Caco-2 (cell line): ENCODE measurements at regions of chr13 and their contacts with region 1.

Region 1: DNA sequence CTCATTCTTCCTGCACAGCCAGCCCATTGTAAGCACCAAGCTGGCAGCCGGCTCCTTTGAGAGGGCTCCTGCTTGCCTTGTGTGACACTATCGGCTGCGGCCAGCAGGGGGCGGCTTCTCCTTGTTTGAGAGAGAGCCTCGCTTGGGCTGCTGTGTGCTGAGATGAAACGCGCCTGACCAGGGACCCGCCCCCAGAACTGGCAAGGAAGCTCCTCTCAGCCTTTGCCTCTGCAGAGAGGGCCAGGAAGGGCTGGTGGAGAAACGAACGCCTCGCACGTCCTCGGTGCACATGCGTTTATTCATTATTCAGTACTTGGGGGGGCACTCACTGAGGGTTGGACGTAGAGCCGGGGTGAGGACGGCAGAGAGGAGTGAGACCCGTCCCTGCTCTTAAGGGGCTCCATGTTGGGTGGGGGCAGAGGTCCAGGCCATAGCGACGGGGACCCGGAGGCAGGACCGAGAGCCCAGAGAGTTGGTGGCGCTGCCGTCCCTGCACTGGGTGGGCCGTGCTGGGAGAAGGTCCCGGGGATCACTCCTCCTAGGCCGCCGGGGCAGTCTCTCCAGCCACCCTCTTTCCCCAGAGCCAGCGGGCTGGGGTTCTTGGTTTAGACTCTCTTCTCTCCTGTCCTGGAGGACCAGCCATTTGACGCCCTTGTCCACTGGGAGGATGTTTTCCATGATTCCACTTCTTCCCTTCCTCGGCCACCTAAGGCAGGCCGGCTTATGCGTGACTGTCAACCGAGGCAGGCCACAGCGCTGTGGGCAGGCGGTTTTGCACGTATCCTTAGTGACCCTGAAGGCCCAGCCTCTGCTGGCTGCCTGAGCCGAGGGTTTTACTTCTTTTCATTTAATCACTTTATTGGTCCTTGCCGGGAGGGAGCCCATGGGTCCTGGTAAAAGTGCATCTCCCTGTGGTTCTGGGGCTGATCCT is 174.5 kb downstream of the KATNAL1 start:
- DNase-seq: peak; percentile 94 to 96
- H3K4me3 ChIP-seq: no peak overlapping the region
- H3K4me3 Mint-ChIP-seq: no peak overlapping the region
- H3K27ac Mint-ChIP-seq: no peak overlapping the region
- H3K4me1 ChIP-seq: peaks cover 5% of the 10 kb centered on the region; the same call in 1 of the 2 replicates
- H3K4me1 Mint-ChIP-seq: peaks cover 12% of the 10 kb centered on the region
- H3K27me3 ChIP-seq: no peaks in the 10 kb centered on the region
- H3K27me3 Mint-ChIP-seq: no peaks in the 10 kb centered on the region
- CTCF ChIP-seq: peak; percentile 92 to 95

Region 2: DNA sequence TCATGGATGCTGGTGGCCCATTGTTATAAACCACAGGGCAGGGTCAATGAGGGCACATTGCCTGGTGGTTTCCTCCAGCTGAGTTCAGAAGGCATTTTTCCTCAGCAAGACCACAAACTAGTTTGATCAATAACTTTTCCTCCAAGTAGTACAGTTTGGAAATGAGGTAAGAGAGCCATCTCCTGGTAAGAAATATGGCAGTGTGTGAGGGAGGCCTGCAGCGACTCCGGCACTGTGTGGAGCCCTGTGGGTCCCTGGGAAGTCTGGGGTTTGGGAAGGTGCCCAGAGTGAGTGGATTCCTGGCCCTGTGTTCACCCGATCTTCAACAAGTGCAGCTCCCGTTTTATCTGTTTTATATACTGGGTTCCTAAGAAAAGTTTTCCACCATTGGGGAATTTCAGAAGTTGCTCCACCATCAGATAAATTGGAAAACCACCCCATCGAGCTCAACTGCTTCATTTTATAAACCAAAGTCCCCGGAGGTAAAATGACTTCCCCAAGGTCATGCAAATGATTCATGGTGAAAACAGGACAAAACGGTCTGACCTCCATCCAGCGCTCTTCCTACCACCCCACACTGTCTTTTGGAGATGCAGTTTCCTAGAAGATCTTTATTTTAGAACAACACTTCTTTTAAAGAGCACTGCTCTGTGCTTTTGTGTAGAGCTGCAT is 26.0 kb after region 1 on chr13:
- CTCF ChIA-PET with region 1: interaction called, 13 read pairs
- POLR2A ChIA-PET with region 1: no interaction called
- intact Hi-C with region 1: loop called (anchors 1 kb)
- DNase-seq: no peak
- H3K4me3 ChIP-seq: no peak overlapping the region
- H3K4me3 Mint-ChIP-seq: no peak overlapping the region
- H3K27ac Mint-ChIP-seq: no peak overlapping the region
- H3K4me1 ChIP-seq: no peaks in the 10 kb centered on the region
- H3K4me1 Mint-ChIP-seq: no peaks in the 10 kb centered on the region
- H3K27me3 ChIP-seq: no peaks in the 10 kb centered on the region
- H3K27me3 Mint-ChIP-seq: peaks cover 3% of the 10 kb centered on the region
- CTCF ChIP-seq: peak; percentile 29 to 46

Region 3: GRCh38 chr13:30241532-30241931 is 108.6 kb after region 1 on chr13:
- CTCF ChIA-PET with region 1: no interaction called
- POLR2A ChIA-PET with region 1: no interaction called
- intact Hi-C with region 1: no loop called
- DNase-seq: no peak
- H3K4me3 ChIP-seq: no peak overlapping the region
- H3K4me3 Mint-ChIP-seq: no peak overlapping the region
- H3K27ac Mint-ChIP-seq: no peak overlapping the region
- H3K4me1 ChIP-seq: no peaks in the 10 kb centered on the region
- H3K4me1 Mint-ChIP-seq: no peaks in the 10 kb centered on the region
- H3K27me3 ChIP-seq: no peaks in the 10 kb centered on the region
- H3K27me3 Mint-ChIP-seq: no peaks in the 10 kb centered on the region
- CTCF ChIP-seq: no peak

Region 4: GRCh38 chr13:30306762-30307193 is 173.9 kb after region 1 on chr13:
- CTCF ChIA-PET with region 1: no interaction called
- POLR2A ChIA-PET with region 1: no interaction called
- intact Hi-C with region 1: loop called (anchors 10 kb)
- DNase-seq: peak; percentile 95
- H3K4me3 ChIP-seq: peak overlapping the region; percentile 82
- H3K4me3 Mint-ChIP-seq: peak overlapping the region; percentile 77
- H3K27ac Mint-ChIP-seq: peak overlapping the region; percentile 51
- H3K4me1 ChIP-seq: 0 out of 2 replicates have a peak, but pooled peaks cover 5% of the 10 kb centered on the region
- H3K4me1 Mint-ChIP-seq: no peaks in the 10 kb centered on the region
- H3K27me3 ChIP-seq: no peaks in the 10 kb centered on the region
- H3K27me3 Mint-ChIP-seq: peaks cover 6% of the 10 kb centered on the region
- CTCF ChIP-seq: no peak

Region 5: DNA sequence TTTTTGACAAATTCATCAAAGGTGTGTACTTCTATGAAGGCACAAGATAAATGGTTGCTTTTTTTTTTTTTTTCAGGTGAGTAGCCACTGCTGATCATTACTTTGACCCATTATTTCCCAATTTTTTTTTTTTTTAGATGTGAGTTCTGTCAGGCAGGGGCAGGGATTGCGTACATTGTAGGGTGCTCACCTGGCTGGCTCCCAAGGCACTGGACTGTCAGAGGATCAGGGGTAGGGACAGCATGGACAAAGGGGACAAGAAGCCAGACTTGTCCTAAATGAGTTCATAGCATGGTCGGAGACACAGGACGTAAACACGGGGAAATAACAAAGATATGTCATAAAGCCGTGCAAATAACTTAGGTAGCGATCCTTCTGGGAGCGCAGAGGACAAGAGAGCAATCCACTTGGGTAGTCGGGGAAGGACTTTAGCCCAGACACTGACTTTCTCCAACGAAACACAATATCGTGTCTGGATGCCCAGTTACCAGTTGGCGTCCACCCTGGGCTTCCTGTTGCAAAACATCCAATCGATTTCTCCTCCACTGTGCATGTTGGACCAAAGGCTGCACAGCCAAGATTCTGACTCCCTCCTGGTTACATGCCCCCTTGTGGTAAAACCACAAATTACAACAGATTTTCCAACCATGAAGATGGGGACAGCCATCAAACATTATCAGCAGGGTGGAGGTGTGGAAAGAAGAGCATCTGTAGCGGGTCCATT is 201.9 kb after region 1 on chr13:
- CTCF ChIA-PET with region 1: no interaction called
- POLR2A ChIA-PET with region 1: no interaction called
- intact Hi-C with region 1: loop called (anchors 5 kb)
- DNase-seq: peak in 1 of 2 experiments; percentile 58
- H3K4me3 ChIP-seq: no peak overlapping the region
- H3K4me3 Mint-ChIP-seq: no peak overlapping the region
- H3K27ac Mint-ChIP-seq: no peak overlapping the region
- H3K4me1 ChIP-seq: peaks cover 55% of the 10 kb centered on the region
- H3K4me1 Mint-ChIP-seq: peaks cover 30% of the 10 kb centered on the region
- H3K27me3 ChIP-seq: no peaks in the 10 kb centered on the region
- H3K27me3 Mint-ChIP-seq: no peaks in the 10 kb centered on the region
- CTCF ChIP-seq: peak; percentile 32 to 48

Region 6: GRCh38 chr13:30551189-30551588 is 418.3 kb after region 1 on chr13:
- CTCF ChIA-PET with region 1: interaction called, 5 read pairs
- POLR2A ChIA-PET with region 1: no interaction called
- intact Hi-C with region 1: loop called (anchors 1 kb)
- DNase-seq: peak in 1 of 2 experiments; percentile 41
- H3K4me3 ChIP-seq: no peak overlapping the region
- H3K4me3 Mint-ChIP-seq: no peak overlapping the region
- H3K27ac Mint-ChIP-seq: no peak overlapping the region
- H3K4me1 ChIP-seq: no peaks in the 10 kb centered on the region
- H3K4me1 Mint-ChIP-seq: no peaks in the 10 kb centered on the region
- H3K27me3 ChIP-seq: no peaks in the 10 kb centered on the region
- H3K27me3 Mint-ChIP-seq: no peaks in the 10 kb centered on the region
- CTCF ChIP-seq: peak; percentile 33 to 61

Region 7: GRCh38 chr13:30581582-30581981 is 448.7 kb after region 1 on chr13:
- CTCF ChIA-PET with region 1: interaction called, 10 read pairs
- POLR2A ChIA-PET with region 1: no interaction called
- intact Hi-C with region 1: loop called (anchors 5 kb)
- DNase-seq: peak in 1 of 2 experiments; percentile 35
- H3K4me3 ChIP-seq: no peak overlapping the region
- H3K4me3 Mint-ChIP-seq: no peak overlapping the region
- H3K27ac Mint-ChIP-seq: no peak overlapping the region
- H3K4me1 ChIP-seq: no peaks in the 10 kb centered on the region
- H3K4me1 Mint-ChIP-seq: peaks cover 8% of the 10 kb centered on the region
- H3K27me3 ChIP-seq: no peaks in the 10 kb centered on the region; the same call in 1 of the 2 replicates
- H3K27me3 Mint-ChIP-seq: no peaks in the 10 kb centered on the region
- CTCF ChIP-seq: peak; percentile 50 to 51